ENCODE measurements at regions of chr3 and their contacts with region 1.

Region 1: DNA sequence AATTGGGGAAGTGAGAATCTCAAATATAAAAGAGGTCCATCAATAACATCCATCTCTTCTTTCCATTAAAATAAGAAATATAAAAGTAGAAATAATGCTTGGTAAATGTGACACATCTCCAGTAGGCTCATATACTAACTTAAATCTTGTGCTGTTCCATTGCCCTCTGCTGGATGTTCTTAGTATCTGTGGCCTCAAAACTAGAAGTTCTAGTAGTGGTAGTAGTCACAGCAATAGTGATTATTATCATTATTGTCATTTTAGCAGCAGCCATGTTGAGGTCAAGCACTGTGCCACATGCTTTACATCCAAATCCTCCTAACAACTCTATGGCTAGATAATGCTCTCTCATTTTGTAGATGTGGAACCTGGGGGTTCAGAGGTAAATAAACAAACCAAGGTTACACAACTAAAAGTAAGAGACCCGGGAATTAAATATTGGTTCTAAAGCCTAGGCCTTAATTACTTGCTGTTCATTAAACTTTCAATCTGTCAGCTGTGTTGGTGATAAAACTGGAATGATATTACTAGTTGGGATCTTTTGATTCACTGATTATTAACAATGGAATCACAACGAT is 20.2 kb upstream of the BTLA start:
- DNase-seq: no peak
- H3K4me3 Mint-ChIP-seq: no peak overlapping the region
- H3K27ac Mint-ChIP-seq: peak overlapping the region; percentile 4
- H3K4me1 Mint-ChIP-seq: peaks cover 35% of the 10 kb centered on the region
- H3K27me3 Mint-ChIP-seq: no peaks in the 10 kb centered on the region

Region 2: GRCh38 chr3:112111785-112112402 is 407.6 kb before region 1 on chr3:
- intact Hi-C with region 1: loop called (anchors 1 kb)
- DNase-seq: peak; percentile 48
- H3K4me3 Mint-ChIP-seq: no peak overlapping the region
- H3K27ac Mint-ChIP-seq: no peak overlapping the region
- H3K4me1 Mint-ChIP-seq: peaks cover 17% of the 10 kb centered on the region
- H3K27me3 Mint-ChIP-seq: no peaks in the 10 kb centered on the region

Region 3: GRCh38 chr3:112128843-112129727 is 390.4 kb before region 1 on chr3:
- intact Hi-C with region 1: no loop called
- DNase-seq: peak; percentile 55
- H3K4me3 Mint-ChIP-seq: peak overlapping the region; percentile 38
- H3K27ac Mint-ChIP-seq: peak overlapping the region; percentile 93
- H3K4me1 Mint-ChIP-seq: peaks cover 82% of the 10 kb centered on the region
- H3K27me3 Mint-ChIP-seq: no peaks in the 10 kb centered on the region

Region 4: DNA sequence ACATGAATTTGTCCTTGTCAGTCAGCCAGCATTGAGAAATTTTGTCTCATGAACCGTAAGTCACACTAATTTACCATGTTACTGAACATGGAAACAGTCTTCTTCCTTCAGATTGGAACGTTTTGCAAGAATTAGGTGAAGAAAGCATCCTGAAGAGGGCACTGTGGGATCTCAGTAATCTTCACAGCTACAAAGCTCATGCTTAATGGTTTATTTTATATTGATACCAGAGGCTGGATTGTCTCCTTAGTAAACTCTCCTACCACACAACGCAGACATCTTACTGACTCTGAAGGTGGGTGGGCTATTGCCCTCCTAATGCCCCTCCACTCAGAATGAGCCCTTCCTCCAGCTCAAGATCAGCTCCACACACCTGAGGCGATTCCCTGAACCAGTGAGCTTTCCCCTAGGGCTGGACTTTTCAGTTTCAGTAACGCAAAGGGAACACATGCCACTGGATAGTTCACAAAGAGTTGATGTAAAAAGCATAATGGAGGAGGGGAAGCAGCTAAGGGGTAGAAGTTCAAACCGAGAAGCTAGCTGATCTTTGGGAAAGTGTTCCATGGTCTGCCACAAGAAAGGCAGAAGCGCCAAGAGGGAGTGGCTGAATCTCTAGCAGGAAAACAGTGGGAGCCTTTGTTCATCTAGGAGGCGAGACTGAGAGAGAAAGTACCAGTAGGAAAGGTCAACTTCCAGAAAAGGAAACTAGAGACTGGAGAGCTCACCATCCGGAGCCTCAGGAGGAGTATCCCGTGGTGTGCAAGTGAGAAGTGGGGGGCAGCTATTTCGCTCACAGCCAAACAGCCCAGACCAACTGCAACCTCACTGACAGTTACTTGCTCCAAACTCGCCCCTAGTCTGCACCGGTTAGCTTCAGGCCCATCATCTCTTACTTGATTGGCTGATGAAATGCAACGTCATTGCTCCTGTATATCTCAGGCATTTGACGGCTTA is 225.9 kb before region 1 on chr3 and contains the start of gene SLC9C1:
- intact Hi-C with region 1: loop called (anchors 1 kb)
- DNase-seq: peak; percentile 36
- H3K4me3 Mint-ChIP-seq: peak within 1 kb of the TSS; percentile 72
- H3K27ac Mint-ChIP-seq: peak within 1 kb of the TSS; percentile 79
- H3K4me1 Mint-ChIP-seq: peaks cover 49% of the 10 kb centered on the region
- H3K27me3 Mint-ChIP-seq: no peaks in the 10 kb centered on the region
- total RNA-seq, gene SLC9C1: not detected in 2 replicates

Region 5: DNA sequence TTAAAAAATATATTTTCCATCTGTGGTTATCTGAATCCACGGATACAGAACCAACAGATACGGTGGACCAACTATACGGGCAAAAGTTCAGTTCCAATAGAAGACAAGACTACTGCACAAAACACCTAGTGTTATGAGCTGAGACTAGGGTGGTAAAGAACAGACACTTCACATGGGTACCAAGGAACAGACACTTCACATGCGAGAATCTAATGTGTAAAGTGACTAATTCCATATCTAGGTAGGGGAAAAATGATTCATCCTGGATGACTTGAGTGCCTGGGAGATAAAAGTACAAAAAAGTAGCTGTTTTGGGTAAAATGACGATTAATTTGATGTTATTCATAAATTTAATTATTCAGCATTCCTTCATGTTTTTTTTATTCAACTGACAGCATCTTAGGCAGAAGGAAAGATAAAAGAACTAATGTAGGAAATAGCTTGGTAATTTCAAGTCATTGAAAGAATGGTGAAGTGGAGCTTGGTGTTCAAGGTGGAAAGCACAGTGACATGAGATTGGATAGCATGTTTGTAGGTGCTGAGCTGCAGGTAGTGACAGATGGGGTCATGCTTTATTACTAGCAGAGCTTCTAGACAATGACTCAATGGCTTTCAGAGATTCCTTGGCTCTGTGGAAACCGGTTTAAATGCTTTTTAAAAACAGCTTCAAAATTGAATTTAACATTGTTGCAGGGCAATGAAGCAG is 181.3 kb before region 1 on chr3:
- intact Hi-C with region 1: loop called (anchors 1 kb)
- DNase-seq: no peak
- H3K4me3 Mint-ChIP-seq: peak overlapping the region; percentile 69
- H3K27ac Mint-ChIP-seq: peak overlapping the region; percentile 67
- H3K4me1 Mint-ChIP-seq: peaks cover 81% of the 10 kb centered on the region
- H3K27me3 Mint-ChIP-seq: no peaks in the 10 kb centered on the region

Region 6: GRCh38 chr3:112464264-112464663 is 55.2 kb before region 1 on chr3:
- intact Hi-C with region 1: loop called (anchors 1 kb)
- DNase-seq: no peak
- H3K4me3 Mint-ChIP-seq: peak overlapping the region; percentile 31
- H3K27ac Mint-ChIP-seq: peak overlapping the region; percentile 59
- H3K4me1 Mint-ChIP-seq: peaks cover 85% of the 10 kb centered on the region
- H3K27me3 Mint-ChIP-seq: peaks cover 1% of the 10 kb centered on the region

Region 7: DNA sequence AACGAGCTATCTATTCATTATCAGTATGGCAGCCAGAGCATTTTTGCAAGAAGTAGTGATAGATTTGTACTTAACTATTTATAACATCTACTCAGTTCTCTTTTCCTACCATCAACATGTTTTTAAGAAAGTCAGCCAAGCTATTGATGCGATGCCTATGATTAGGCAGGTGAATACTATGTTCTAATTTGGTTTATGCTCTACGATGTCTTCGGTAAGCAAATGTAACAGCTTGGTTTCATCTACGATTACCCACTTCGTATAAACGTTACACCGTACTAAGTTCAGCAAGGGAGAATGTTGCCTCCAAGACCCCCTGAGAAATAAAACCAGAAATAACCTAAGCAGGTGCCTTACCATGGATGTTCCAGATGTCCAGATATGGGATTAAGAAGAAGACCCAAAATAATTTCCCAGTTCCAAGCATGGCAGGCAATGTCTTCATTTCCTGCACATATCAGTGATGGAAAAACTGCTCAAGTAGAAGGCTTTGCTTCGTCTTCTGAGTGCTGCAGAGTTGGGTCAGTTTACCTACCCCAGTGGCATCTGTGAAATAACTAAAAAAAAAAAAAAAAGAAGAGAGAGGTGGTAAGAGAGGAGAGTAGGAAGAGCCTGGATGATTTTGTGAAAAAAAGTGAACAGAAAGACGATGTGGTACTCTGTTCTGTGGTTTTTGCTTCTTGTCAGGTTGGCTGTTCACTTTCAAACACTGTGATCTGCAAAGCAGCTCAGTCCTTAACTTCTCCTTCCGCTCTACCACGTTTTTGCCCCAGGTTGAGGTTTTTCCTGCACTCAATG is 20.4 kb before region 1 on chr3 and contains the start of gene BTLA:
- intact Hi-C with region 1: loop called (anchors 1 kb)
- DNase-seq: peak; percentile 35
- H3K4me3 Mint-ChIP-seq: peak within 1 kb of the TSS; percentile 95
- H3K27ac Mint-ChIP-seq: peak within 1 kb of the TSS; percentile 97
- H3K4me1 Mint-ChIP-seq: peaks cover 67% of the 10 kb centered on the region
- H3K27me3 Mint-ChIP-seq: no peaks in the 10 kb centered on the region
- total RNA-seq, gene BTLA: 39.4 and 40.7 TPM in 2 replicates

Region 8: GRCh38 chr3:112699436-112699978 is 180.0 kb after region 1 on chr3:
- intact Hi-C with region 1: no loop called
- DNase-seq: no peak
- H3K4me3 Mint-ChIP-seq: no peak overlapping the region
- H3K27ac Mint-ChIP-seq: no peak overlapping the region
- H3K4me1 Mint-ChIP-seq: no peaks in the 10 kb centered on the region
- H3K27me3 Mint-ChIP-seq: peaks cover 20% of the 10 kb centered on the region